Panc1 (cell line): ENCODE measurements at regions of chr2 and their contacts with region 1.

Region 1: DNA sequence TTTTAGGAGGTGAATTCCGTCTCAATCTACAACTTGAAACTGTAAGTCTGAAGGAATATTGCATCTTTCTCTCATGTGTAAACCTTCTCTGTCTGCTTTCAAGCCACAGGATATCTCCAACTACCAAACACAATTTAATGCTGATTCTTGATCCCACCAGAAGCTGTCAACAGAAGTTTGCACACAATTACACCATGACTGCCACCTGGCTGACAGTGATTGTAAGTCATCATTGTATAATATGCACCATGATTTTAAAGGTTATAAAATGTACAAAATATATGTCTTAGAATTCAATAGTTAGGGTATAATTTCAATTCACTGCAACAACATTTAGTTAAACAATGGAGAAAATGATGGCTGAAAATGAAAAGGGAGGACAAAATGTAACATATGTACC is 18.4 kb downstream of the PREPL start:
- DNase-seq: no peak
- ATAC-seq: peak; percentile 58; the same call in 1 of the 2 replicates
- H3K4me3 ChIP-seq: no peak overlapping the region
- H3K27ac ChIP-seq: 0 out of 2 replicates have a peak overlapping the region, but pooled peaks have one; percentile 9
- H3K4me1 ChIP-seq: no peaks in the 10 kb centered on the region
- H3K27me3 ChIP-seq: no peaks in the 10 kb centered on the region
- CTCF ChIP-seq: peak; percentile 45; the same call in 1 of the 2 replicates

Region 2: GRCh38 chr2:44044281-44044720 is 298.6 kb before region 1 on chr2:
- CTCF ChIA-PET with region 1: interaction called, 4 read pairs
- POLR2A ChIA-PET with region 1: no interaction called
- in situ Hi-C with region 1: no loop called
- intact Hi-C with region 1: loop called (anchors 5 kb)
- DNase-seq: peak; percentile 68
- ATAC-seq: peak; percentile 100
- H3K4me3 ChIP-seq: no peak overlapping the region
- H3K27ac ChIP-seq: peak overlapping the region; percentile 67
- H3K4me1 ChIP-seq: 0 out of 2 replicates have a peak, but pooled peaks cover 4% of the 10 kb centered on the region
- H3K27me3 ChIP-seq: no peaks in the 10 kb centered on the region
- CTCF ChIP-seq: peak; percentile 92

Region 3: DNA sequence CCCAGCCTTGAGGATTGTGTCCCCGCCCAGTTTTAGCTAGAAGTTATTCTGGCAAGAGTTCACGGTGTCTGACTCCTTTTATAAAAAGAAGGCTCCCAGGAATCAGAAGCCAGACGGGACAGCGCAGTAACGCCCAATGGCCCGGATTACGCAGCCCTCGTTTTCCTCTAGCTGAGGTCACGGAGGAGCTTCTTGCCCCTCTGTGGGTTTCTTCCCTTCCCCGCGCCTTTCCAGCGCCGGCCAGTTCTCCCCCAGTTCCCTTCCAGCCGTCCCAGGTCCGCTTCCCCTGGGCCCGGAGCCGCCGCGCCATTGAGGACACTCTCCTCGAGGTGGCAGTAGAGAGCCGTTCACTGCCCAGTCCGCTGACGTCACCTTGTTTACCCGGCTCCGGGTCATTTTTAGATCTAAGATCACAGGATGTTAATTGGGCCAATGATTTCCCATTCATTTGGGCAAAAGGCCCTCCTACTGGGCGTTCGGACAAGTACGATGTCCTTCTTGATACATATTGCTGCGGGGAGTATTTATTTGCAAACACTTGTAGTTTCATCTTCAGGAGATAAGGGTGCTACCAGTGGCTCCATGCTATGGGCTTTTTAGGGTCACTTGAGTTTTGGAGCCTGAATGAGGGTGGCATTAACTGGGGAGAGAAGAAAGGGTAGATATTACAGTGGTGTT is 255.7 kb before region 1 on chr2:
- CTCF ChIA-PET with region 1: no interaction called
- POLR2A ChIA-PET with region 1: no interaction called
- in situ Hi-C with region 1: no loop called
- intact Hi-C with region 1: loop called (anchors 10 kb)
- DNase-seq: peak; percentile 56
- ATAC-seq: peak; percentile 96
- H3K4me3 ChIP-seq: peak overlapping the region; percentile 50 to 79
- H3K27ac ChIP-seq: peak overlapping the region; percentile 69
- H3K4me1 ChIP-seq: peaks cover 8% of the 10 kb centered on the region
- H3K27me3 ChIP-seq: no peaks in the 10 kb centered on the region
- CTCF ChIP-seq: peak; percentile 97

Region 4: GRCh38 chr2:44244129-44244871 is 98.6 kb before region 1 on chr2:
- CTCF ChIA-PET with region 1: interaction called, 3 read pairs
- POLR2A ChIA-PET with region 1: no interaction called
- in situ Hi-C with region 1: no loop called
- intact Hi-C with region 1: loop called (anchors 2 kb)
- DNase-seq: peak; percentile 61
- ATAC-seq: peak; percentile 77
- H3K4me3 ChIP-seq: peak overlapping the region; percentile 21 to 38
- H3K27ac ChIP-seq: peak overlapping the region; percentile 81
- H3K4me1 ChIP-seq: peaks cover 23% of the 10 kb centered on the region
- H3K27me3 ChIP-seq: no peaks in the 10 kb centered on the region
- CTCF ChIP-seq: peak; percentile 80

Region 5: GRCh38 chr2:44802777-44803424 is 460.0 kb after region 1 on chr2:
- CTCF ChIA-PET with region 1: interaction called, 15 read pairs
- POLR2A ChIA-PET with region 1: no interaction called
- in situ Hi-C with region 1: no loop called
- intact Hi-C with region 1: no loop called
- DNase-seq: no peak
- ATAC-seq: no peak
- H3K4me3 ChIP-seq: no peak overlapping the region
- H3K27ac ChIP-seq: no peak overlapping the region
- H3K4me1 ChIP-seq: no peaks in the 10 kb centered on the region
- H3K27me3 ChIP-seq: peaks cover 26% of the 10 kb centered on the region
- CTCF ChIP-seq: no peak